ENCODE measurements at regions of chr2 and their contacts with region 1.

Region 1: DNA sequence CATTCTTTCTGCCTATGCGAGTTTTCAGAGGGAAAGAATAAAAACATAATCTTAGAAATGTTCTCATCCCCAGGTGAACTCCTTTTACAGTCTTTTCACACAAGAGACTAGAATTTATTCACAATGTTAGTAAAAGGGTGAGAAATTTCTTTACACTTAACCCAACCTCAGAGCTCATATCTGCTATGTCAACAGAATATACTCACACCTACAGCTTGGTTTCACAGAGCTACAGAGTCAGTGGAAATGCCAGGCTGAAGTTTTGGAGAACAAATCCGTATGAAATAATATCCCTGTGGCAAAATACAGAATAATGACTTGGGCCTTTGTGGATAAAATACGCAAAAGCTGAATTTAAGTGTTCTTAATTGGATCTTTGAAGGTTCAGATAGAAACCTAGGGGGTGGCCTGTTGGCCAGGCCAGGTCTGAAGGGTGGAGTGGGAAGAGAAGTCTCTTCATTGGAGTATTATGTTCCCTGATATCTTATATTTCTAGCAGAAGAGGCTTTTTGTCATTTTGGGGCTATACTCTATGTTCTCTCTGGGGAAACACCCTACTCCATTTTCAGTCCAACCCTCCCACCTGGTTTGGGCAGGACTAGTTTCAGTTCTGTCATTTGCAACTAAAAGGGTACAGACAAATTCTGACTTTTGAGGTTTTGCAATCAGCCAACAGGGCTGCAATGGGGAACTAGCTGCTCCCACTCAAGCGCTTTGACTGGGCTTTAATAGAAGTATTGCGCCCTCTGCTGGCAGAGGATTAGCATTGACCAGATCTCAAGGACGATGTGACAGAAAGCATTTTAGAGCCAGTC is 25.7 kb downstream of the FBXO48 start:
- DNase-seq: peak; percentile 67
- H3K4me3 ChIP-seq: no peak overlapping the region
- H3K27ac ChIP-seq: no peak overlapping the region
- H3K4me1 ChIP-seq: no peaks in the 10 kb centered on the region
- H3K27me3 ChIP-seq: peaks cover 3 to 12% of the 10 kb centered on the region in 2 experiments
- CTCF ChIP-seq: peak; percentile 79 to 83
- POLR2A ChIP-seq: no peak

Region 2: DNA sequence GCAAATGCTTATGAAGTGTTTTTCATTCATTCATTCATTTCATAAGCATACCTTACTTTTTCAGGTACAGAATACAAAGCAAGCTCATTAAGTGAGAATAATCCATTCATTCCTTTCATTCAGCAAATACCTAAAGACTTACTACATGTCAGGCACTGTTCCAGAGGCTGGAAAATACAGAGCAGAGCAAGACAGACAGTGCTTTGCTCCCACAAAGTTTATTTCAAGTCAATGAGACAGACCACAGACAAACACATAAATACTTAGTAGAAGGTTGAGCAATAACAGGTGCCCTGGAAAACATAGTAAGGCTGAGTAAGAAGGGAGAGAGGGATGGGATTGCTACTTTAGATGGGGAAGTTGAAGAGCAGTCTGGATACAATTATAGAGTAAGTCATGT is 688.4 kb before region 1 on chr2:
- CTCF ChIA-PET with region 1: no interaction called
- POLR2A ChIA-PET with region 1: no interaction called
- dilution Hi-C with region 1: no loop called
- intact Hi-C with region 1: no loop called
- DNase-seq: no peak
- H3K4me3 ChIP-seq: no peak overlapping the region
- H3K27ac ChIP-seq: no peak overlapping the region
- H3K4me1 ChIP-seq: no peaks in the 10 kb centered on the region
- H3K27me3 ChIP-seq: no peaks in the 10 kb centered on the region
- CTCF ChIP-seq: no peak
- POLR2A ChIP-seq: no peak

Region 3: DNA sequence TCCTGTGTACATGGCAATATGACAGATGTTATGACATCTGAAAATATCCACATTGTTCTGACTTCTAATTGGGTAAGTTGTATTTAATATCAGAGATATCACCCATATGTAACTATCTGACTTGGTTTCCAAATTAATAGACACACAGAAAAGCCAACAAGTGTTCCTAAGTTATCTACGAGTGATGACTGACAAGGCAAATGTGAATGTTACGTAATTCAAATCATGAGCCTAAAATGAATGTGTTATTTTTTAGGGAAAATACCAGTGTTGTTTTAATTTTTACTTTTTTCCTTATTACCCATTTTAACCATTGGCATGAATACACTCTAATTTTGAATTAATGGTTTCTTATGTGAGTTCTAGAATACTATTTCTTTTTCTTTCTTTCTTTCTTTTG is 299.5 kb before region 1 on chr2:
- CTCF ChIA-PET with region 1: no interaction called
- POLR2A ChIA-PET with region 1: no interaction called
- dilution Hi-C with region 1: no loop called
- intact Hi-C with region 1: no loop called
- DNase-seq: no peak
- H3K4me3 ChIP-seq: no peak overlapping the region
- H3K27ac ChIP-seq: no peak overlapping the region
- H3K4me1 ChIP-seq: no peaks in the 10 kb centered on the region
- H3K27me3 ChIP-seq: no peaks in the 10 kb centered on the region
- CTCF ChIP-seq: no peak
- POLR2A ChIP-seq: no peak

Region 4: DNA sequence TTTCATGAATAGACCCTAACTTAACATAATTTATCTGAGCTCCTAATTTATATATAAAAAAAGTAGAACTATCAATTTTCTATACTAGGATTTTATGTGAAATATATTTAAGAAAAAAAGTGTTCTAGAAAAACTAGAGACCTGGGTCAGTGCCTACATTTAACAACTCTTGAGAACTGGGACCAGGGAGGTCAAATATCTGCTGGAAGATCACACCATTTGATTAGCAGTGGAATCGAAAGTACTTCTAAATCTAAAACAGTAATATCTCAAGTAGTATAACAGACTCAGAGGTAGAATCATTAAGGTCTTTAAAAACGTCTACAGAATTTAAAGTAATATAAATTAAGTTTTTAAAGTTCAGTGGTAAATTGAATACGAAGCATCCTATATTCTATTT is 223.7 kb before region 1 on chr2:
- CTCF ChIA-PET with region 1: no interaction called
- POLR2A ChIA-PET with region 1: no interaction called
- dilution Hi-C with region 1: no loop called
- intact Hi-C with region 1: no loop called
- DNase-seq: no peak
- H3K4me3 ChIP-seq: no peak overlapping the region
- H3K27ac ChIP-seq: no peak overlapping the region
- H3K4me1 ChIP-seq: peaks cover 5% of the 10 kb centered on the region
- H3K27me3 ChIP-seq: no peaks in the 10 kb centered on the region
- CTCF ChIP-seq: no peak
- POLR2A ChIP-seq: no peak

Region 5: DNA sequence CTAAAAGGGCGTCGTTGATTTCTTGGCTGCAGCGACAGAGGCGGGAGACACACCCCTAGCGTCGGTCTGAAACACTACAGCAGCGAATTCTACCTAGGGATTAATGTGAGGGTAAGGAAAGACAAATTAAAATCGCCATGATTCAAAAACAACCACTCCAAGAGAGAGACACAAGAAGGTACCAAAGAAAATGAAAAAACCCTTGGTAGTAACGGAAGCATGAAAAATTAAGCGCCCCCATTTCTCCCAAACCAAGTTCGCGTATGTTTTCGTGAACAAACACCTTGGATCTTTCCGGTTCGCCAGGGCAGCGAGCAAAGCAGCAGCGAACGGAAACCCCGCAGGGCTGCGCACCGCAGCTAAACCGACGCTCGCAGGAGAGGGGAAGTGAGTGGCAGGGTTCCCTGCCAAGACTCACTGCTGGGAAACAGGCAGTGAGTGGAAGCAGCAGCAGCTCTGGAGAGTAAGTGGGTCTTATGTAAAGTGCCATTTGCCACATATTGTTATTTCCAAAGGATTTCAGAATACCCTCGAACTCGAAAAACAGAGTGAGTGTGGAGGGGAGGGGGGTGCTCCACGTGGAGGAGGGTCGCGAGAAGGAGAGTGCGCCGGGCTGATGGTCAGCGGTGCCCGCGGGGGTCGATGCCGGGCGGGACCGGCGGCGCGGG is 190.1 kb before region 1 on chr2:
- CTCF ChIA-PET with region 1: interaction called, 3 read pairs
- POLR2A ChIA-PET with region 1: no interaction called
- dilution Hi-C with region 1: no loop called
- intact Hi-C with region 1: loop called (anchors 10 kb)
- DNase-seq: peak; percentile 85
- H3K4me3 ChIP-seq: peak overlapping the region; percentile 55 to 98 (median 88)
- H3K27ac ChIP-seq: peak overlapping the region; percentile 82
- H3K4me1 ChIP-seq: peaks cover 38% of the 10 kb centered on the region
- H3K27me3 ChIP-seq: no peaks in the 10 kb centered on the region
- CTCF ChIP-seq: peak; percentile 63
- POLR2A ChIP-seq: no peak

Region 6: DNA sequence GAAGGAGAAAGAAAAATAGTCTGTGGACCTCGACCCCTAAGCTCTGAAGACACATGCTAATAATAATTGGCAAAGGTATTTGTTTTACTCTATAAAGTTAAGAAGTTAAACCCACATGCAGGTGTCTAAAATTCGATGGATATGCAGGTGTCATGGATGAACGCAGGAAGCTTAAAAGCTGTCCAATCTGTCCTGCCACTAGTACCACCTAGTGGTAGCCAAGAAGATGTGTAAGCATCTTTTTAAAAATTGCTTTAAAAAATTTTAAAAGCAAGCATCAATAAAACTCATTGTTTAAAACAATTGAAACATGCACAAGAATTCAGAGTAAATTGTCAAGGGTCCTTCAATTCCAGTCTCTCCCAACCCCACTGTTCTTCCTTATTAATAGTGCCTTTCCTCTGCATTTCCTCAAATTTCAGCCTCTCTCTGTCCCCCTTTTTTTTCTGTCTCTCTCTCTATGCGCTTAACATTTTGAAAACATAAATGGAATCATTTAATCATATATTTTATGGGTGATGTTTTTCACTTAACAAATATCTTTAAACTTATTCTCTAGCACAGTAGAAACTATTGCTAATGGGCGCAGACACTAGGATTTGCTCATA is 158.5 kb before region 1 on chr2:
- CTCF ChIA-PET with region 1: interaction called, 5 read pairs
- POLR2A ChIA-PET with region 1: no interaction called
- dilution Hi-C with region 1: no loop called
- intact Hi-C with region 1: loop called (anchors 5 kb)
- DNase-seq: peak; percentile 35
- H3K4me3 ChIP-seq: no peak overlapping the region
- H3K27ac ChIP-seq: no peak overlapping the region
- H3K4me1 ChIP-seq: no peaks in the 10 kb centered on the region
- H3K27me3 ChIP-seq: no peaks in the 10 kb centered on the region
- CTCF ChIP-seq: peak; percentile 43 to 61
- POLR2A ChIP-seq: no peak

Region 7: DNA sequence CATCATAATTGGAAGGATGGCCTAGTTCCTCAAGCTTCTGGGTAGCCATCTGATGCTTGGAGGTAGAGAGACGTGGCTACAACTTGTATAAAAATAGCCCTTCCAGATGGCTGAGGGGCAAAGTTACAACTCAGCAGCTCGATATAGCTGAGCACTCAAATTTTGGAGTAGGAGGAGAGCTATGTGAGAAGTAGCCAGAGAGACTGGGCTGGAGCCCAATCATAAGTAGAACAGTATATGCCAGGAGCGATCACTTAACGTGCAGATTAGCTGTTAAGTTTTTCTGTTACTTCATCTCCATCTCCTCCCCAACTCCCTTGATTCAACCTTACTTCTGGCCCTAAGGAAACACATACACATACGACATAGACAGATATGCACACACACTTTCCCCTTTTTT is 150.5 kb before region 1 on chr2:
- CTCF ChIA-PET with region 1: interaction called, 16 read pairs
- POLR2A ChIA-PET with region 1: no interaction called
- dilution Hi-C with region 1: no loop called
- intact Hi-C with region 1: no loop called
- DNase-seq: no peak
- H3K4me3 ChIP-seq: no peak overlapping the region
- H3K27ac ChIP-seq: no peak overlapping the region
- H3K4me1 ChIP-seq: no peaks in the 10 kb centered on the region
- H3K27me3 ChIP-seq: no peaks in the 10 kb centered on the region
- CTCF ChIP-seq: no peak
- POLR2A ChIP-seq: no peak

Region 8: DNA sequence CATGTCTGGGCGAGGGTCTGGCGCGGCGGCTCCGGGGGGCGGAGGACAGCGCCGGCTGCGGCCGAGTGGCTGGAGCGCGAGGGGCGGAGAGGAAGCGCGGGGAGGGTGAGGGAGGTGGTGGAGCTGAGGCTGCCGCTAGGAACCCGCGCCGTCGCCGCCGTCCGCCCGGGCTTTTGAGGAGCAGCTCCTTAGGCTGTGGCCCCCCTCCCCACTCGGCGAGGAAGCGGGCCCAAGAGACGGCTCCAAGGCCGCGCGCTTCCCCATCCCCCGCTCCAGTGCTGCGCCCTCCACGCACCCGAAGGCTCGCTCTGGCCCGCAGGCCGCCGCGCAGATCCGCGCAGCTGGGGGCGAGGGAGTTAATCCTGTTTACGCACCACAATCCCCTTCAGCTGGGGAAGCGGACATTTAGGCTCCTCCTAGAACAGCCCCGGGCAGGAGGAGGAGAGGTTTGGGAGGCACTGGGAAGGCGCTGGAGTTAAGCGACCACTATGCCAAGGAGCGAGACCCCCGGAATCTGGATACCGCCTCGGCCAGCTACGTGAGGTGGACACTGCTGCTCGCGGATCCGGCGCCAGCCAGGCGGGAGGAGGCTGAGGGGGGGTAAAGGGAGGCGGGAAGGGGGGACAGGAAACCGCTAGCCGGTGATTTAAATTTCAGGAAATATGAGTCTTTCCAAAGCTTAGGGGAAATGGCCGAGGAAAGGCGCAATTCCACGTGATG is 121.8 kb before region 1 on chr2 and contains the start of gene CNRIP1:
- CTCF ChIA-PET with region 1: interaction called, 7 read pairs
- POLR2A ChIA-PET with region 1: no interaction called
- dilution Hi-C with region 1: no loop called
- intact Hi-C with region 1: loop called (anchors 1 kb)
- DNase-seq: peak; percentile 94
- H3K4me3 ChIP-seq: peak within 1 kb of the TSS; percentile 60 to 83 (median 79)
- H3K27ac ChIP-seq: peak within 1 kb of the TSS; percentile 99
- H3K4me1 ChIP-seq: peaks cover 22% of the 10 kb centered on the region
- H3K27me3 ChIP-seq: no peaks in the 10 kb centered on the region
- CTCF ChIP-seq: no peak
- POLR2A ChIP-seq: no peak
- total RNA-seq, gene CNRIP1: 73.8 and 74.6 TPM in 2 replicates

Region 9: GRCh38 chr2:68362069-68362468 is 79.3 kb before region 1 on chr2:
- CTCF ChIA-PET with region 1: interaction called, 12 read pairs
- POLR2A ChIA-PET with region 1: no interaction called
- dilution Hi-C with region 1: no loop called
- intact Hi-C with region 1: loop called (anchors 1 kb)
- DNase-seq: peak; percentile 58
- H3K4me3 ChIP-seq: no peak overlapping the region
- H3K27ac ChIP-seq: no peak overlapping the region
- H3K4me1 ChIP-seq: no peaks in the 10 kb centered on the region
- H3K27me3 ChIP-seq: no peaks in the 10 kb centered on the region
- CTCF ChIP-seq: peak; percentile 78 to 84
- POLR2A ChIP-seq: no peak

Region 10: DNA sequence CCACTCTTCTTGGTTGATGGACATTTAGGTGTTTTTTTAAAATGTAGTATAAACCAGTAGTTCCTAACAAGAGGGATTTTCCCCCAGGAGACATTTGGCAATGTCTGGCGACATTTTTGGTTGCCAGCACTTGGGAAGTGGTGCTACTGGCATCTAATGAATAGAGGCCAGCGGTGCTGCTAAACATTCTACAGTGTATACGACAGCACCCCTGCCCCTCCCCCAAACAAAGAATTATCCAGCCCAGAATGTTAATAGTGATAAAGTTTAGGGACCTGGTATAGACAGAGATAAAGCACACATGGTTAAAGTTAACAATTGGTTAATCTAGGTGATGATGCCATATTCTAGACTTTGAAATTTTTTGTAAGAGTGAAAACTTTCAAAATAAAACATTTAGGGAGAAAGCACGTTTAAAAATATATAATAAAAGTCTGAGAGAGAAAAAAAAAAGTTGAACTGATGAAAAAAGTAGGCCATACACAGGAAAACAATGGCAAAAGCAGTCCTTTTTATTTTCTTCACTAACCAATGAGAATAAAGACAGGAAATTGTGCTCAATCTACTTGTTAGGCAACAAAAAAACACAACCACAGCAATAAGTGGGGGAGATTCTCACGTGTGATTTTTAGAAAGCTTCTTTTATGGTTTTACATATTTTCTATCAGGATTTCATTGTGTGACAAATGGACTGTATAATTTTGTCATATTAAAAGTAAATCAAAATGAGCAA is 10.9 kb after region 1 on chr2:
- CTCF ChIA-PET with region 1: interaction called, 18 read pairs
- POLR2A ChIA-PET with region 1: no interaction called
- dilution Hi-C with region 1: no loop called
- intact Hi-C with region 1: no loop called
- DNase-seq: no peak
- H3K4me3 ChIP-seq: no peak overlapping the region
- H3K27ac ChIP-seq: no peak overlapping the region
- H3K4me1 ChIP-seq: no peaks in the 10 kb centered on the region
- H3K27me3 ChIP-seq: no peaks in the 10 kb centered on the region
- CTCF ChIP-seq: no peak
- POLR2A ChIP-seq: no peak

Region 11: GRCh38 chr2:68516051-68516955 is 74.9 kb after region 1 on chr2:
- CTCF ChIA-PET with region 1: no interaction called
- POLR2A ChIA-PET with region 1: no interaction called
- dilution Hi-C with region 1: no loop called
- intact Hi-C with region 1: no loop called
- DNase-seq: no peak
- H3K4me3 ChIP-seq: no peak overlapping the region
- H3K27ac ChIP-seq: no peak overlapping the region
- H3K4me1 ChIP-seq: no peaks in the 10 kb centered on the region
- H3K27me3 ChIP-seq: no peaks in the 10 kb centered on the region
- CTCF ChIP-seq: no peak
- POLR2A ChIP-seq: no peak